CD8-positive, alpha-beta T cell (primary cell): ENCODE measurements at regions of chr16 and their contacts with region 1.

Region 1: DNA sequence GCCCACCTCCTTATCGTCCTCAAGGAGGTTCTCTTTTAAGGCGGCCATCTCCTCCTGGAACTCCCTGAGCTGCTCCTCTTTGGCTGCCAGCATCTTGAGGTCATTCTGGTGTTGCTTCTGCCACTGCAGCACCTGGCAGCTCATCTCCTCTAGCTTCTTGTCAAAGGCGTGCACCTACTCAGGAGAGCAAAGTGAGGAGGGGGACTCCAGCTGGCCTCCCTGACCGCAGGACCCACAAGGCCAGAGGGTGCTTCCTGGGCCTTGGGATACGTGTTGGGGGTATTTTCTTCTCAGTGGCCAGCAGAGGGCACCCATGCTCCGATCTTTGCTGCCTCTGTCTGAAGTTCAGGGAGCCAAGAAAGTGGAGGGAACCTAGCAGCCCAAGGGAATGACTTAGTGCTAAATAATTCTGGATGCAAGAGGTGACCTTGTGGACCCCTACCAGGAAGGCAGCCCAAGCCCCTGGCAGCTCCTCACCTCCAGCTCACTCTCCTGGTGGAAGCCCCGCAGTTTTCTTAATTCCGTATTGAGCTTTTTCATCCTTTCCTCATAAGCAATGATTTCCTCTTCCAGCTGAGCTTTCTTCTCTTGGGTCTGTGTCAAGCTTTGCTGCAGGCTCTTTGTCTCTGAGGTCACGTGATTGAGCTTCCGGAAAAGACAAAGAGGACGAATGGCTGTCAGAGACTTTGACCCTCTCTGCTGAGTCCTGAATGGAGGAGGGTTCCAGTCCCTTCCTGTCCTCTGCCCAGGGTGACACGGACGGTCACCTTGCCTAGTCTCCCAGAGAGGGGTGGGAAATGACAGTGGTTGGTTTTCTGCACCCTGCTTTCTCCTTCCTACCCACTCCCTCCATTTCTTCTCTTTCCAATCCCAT is 31.4 kb downstream of the DHX38 start:
- DNase-seq: peak; percentile 28 to 73 (median 52)
- ATAC-seq: peak; percentile 57
- H3K4me3 ChIP-seq: no peak overlapping the region
- H3K4me3 Mint-ChIP-seq: no peak overlapping the region
- H3K27ac ChIP-seq: no peak overlapping the region
- H3K27ac Mint-ChIP-seq: no peak overlapping the region
- H3K4me1 ChIP-seq: no peaks in the 10 kb centered on the region
- H3K4me1 Mint-ChIP-seq: no peaks in the 10 kb centered on the region
- H3K27me3 ChIP-seq: no peaks in the 10 kb centered on the region
- H3K27me3 Mint-ChIP-seq: no peaks in the 10 kb centered on the region
- CTCF ChIP-seq: peak; percentile 66

Region 2: GRCh38 chr16:72111657-72112451 is 13.1 kb before region 1 on chr16:
- CTCF ChIA-PET with region 1: interaction called, 11 read pairs
- POLR2A ChIA-PET with region 1: no interaction called
- intact Hi-C with region 1: no loop called
- DNase-seq: no peak
- ATAC-seq: no peak
- H3K4me3 ChIP-seq: no peak overlapping the region
- H3K4me3 Mint-ChIP-seq: no peak overlapping the region
- H3K27ac ChIP-seq: no peak overlapping the region
- H3K27ac Mint-ChIP-seq: no peak overlapping the region
- H3K4me1 ChIP-seq: no peaks in the 10 kb centered on the region
- H3K4me1 Mint-ChIP-seq: no peaks in the 10 kb centered on the region
- H3K27me3 ChIP-seq: no peaks in the 10 kb centered on the region
- H3K27me3 Mint-ChIP-seq: no peaks in the 10 kb centered on the region
- CTCF ChIP-seq: no peak

Region 3: GRCh38 chr16:72856797-72857196 is 731.8 kb after region 1 on chr16:
- CTCF ChIA-PET with region 1: interaction called, 6 read pairs
- POLR2A ChIA-PET with region 1: no interaction called
- intact Hi-C with region 1: loop called in 1 of 2 experiments (anchors 5 kb)
- DNase-seq: peak in 1 of 9 experiments; percentile 14
- ATAC-seq: no peak
- H3K4me3 ChIP-seq: no peak overlapping the region
- H3K4me3 Mint-ChIP-seq: no peak overlapping the region
- H3K27ac ChIP-seq: no peak overlapping the region
- H3K27ac Mint-ChIP-seq: no peak overlapping the region
- H3K4me1 ChIP-seq: no peaks in the 10 kb centered on the region
- H3K4me1 Mint-ChIP-seq: no peaks in the 10 kb centered on the region
- H3K27me3 ChIP-seq: no peaks in the 10 kb centered on the region
- H3K27me3 Mint-ChIP-seq: peaks cover 5% of the 10 kb centered on the region
- CTCF ChIP-seq: peak; percentile 14

Region 4: GRCh38 chr16:73878611-73879010 is 1753.6 kb after region 1 on chr16:
- CTCF ChIA-PET with region 1: no interaction called
- POLR2A ChIA-PET with region 1: no interaction called
- intact Hi-C with region 1: loop called (anchors 10 kb)
- DNase-seq: peak in 1 of 9 experiments; percentile 19
- ATAC-seq: no peak
- H3K4me3 ChIP-seq: no peak overlapping the region
- H3K4me3 Mint-ChIP-seq: no peak overlapping the region
- H3K27ac ChIP-seq: no peak overlapping the region
- H3K27ac Mint-ChIP-seq: no peak overlapping the region
- H3K4me1 ChIP-seq: no peaks in the 10 kb centered on the region
- H3K4me1 Mint-ChIP-seq: no peaks in the 10 kb centered on the region
- H3K27me3 ChIP-seq: no peaks in the 10 kb centered on the region
- H3K27me3 Mint-ChIP-seq: no peaks in the 10 kb centered on the region
- CTCF ChIP-seq: no peak

Region 5: GRCh38 chr16:74034862-74035261 is 1909.9 kb after region 1 on chr16:
- CTCF ChIA-PET with region 1: no interaction called
- POLR2A ChIA-PET with region 1: no interaction called
- intact Hi-C with region 1: loop called in 1 of 2 experiments (anchors 10 kb)
- DNase-seq: peak in 1 of 9 experiments; percentile 1
- ATAC-seq: no peak
- H3K4me3 ChIP-seq: no peak overlapping the region
- H3K4me3 Mint-ChIP-seq: no peak overlapping the region
- H3K27ac ChIP-seq: no peak overlapping the region
- H3K27ac Mint-ChIP-seq: no peak overlapping the region
- H3K4me1 ChIP-seq: no peaks in the 10 kb centered on the region
- H3K4me1 Mint-ChIP-seq: no peaks in the 10 kb centered on the region
- H3K27me3 ChIP-seq: no peaks in the 10 kb centered on the region
- H3K27me3 Mint-ChIP-seq: no peaks in the 10 kb centered on the region
- CTCF ChIP-seq: no peak